AG04449 (cell line): ENCODE measurements at regions of chr5 and their contacts with region 1.

Region 1: DNA sequence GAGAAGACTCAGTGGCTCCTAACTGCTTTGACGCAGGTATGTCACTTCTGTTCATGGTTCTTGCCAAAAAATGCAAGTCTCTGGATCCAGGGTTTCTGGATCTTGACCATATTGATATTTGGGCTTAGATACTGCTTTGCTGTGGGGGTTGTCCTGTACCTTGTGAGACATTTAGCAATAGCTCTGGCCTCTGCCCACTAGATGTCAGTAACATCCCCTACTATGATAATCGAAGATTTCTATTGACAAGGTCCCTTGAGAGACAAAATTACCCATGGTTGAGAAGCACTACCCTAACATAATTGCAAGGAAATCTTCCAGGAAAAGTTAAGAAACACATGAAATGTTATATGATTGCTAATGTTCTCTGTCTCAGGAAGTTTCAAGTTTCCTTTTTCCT is 285.4 kb downstream of the TMEM232 start:
- DNase-seq: peak; percentile 21
- H3K4me3 ChIP-seq: no peak overlapping the region
- CTCF ChIP-seq: peak; percentile 59

Region 2: DNA sequence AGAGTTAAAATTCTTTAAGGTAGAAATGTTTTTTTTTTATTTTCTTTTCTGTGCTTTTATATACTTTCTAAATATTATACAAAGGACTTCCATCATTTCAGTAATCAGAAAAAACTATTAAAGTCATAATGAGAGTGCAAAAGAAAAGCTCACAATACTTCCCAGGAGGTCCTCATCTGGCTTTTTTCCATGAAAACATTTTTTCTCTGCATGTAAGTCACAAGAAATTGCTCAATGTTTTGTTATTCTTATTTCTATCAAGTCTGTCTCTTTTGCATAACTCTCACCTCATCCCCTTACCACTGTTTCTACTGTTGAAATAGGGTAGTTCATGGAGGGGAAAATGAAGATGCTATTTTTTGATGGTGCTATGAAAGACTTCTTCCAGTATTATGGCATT is 89.6 kb before region 1 on chr5:
- CTCF ChIA-PET with region 1: no interaction called
- POLR2A ChIA-PET with region 1: no interaction called
- DNase-seq: no peak
- H3K4me3 ChIP-seq: no peak overlapping the region
- CTCF ChIP-seq: no peak

Region 3: GRCh38 chr5:110625376-110625999 is 184.5 kb after region 1 on chr5:
- CTCF ChIA-PET with region 1: interaction called, 40 read pairs
- POLR2A ChIA-PET with region 1: no interaction called
- DNase-seq: no peak
- H3K4me3 ChIP-seq: no peak overlapping the region
- CTCF ChIP-seq: peak; percentile 5